ENCODE measurements at regions of chr5 and their contacts with region 1.

Region 1: DNA sequence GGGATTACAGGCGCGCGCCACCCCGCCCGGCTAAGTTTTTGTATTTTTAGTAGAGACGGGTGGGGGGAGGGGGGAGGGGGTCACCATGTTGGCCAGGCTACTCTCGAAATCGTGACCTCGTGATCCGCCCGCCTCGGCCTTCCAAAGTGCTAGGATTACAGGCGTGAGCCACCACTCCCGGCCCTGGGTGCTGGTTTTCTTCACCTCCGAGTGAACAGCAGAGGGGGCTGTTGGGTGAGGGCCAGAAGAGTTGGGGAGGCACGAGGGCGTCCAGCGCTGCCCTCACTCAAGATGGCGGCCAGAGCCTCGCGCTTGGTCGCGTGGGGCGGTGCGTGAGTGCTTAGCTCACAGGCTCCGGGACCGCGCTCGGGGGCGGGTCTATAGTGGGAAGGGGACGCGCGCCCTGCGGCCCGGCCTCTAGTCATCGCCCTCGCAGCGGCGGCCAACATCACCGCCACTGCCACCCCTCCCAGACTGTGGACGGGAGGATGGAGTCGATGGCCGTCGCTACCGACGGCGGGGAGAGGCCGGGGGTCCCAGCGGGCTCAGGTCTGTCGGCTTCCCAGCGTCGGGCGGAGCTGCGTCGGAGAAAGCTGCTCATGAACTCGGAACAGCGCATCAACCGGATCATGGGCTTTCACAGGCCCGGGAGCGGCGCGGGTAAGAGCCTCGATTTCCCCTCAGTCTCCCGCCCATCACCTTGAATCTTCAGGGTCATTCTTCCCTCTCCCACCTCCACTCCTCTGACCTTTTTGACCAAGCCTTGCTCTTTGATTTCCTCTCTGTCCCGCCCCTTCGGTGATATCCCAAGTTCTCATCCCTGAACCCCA is at the start of gene CAMLG:
- DNase-seq: peak; percentile 97
- H3K4me3 Mint-ChIP-seq: peak within 1 kb of the TSS; percentile 81
- H3K27ac Mint-ChIP-seq: peak within 1 kb of the TSS; percentile 88
- H3K4me1 Mint-ChIP-seq: peaks cover 26% of the 10 kb centered on the region
- H3K27me3 Mint-ChIP-seq: no peaks in the 10 kb centered on the region
- total RNA-seq, gene CAMLG: 34.6 to 36.9 TPM

Region 2: GRCh38 chr5:134004592-134005375 is 733.6 kb before region 1 on chr5 and contains the start of gene VDAC1:
- CTCF ChIA-PET with region 1: no interaction called
- intact Hi-C with region 1: loop called (anchors 10 kb)
- DNase-seq: peak; percentile 79
- H3K4me3 Mint-ChIP-seq: peak within 1 kb of the TSS; percentile 89
- H3K27ac Mint-ChIP-seq: peak within 1 kb of the TSS; percentile 95
- H3K4me1 Mint-ChIP-seq: peaks cover 42% of the 10 kb centered on the region
- H3K27me3 Mint-ChIP-seq: no peaks in the 10 kb centered on the region
- total RNA-seq, gene VDAC1: 485 to 513 TPM

Region 3: GRCh38 chr5:134304311-134304710 is 434.0 kb before region 1 on chr5:
- CTCF ChIA-PET with region 1: interaction called, 3 read pairs
- intact Hi-C with region 1: loop called (anchors 1 kb)
- DNase-seq: no peak
- H3K4me3 Mint-ChIP-seq: no peak overlapping the region
- H3K27ac Mint-ChIP-seq: no peak overlapping the region
- H3K4me1 Mint-ChIP-seq: peaks cover 6% of the 10 kb centered on the region
- H3K27me3 Mint-ChIP-seq: no peaks in the 10 kb centered on the region

Region 4: GRCh38 chr5:134527146-134527960 is 211.0 kb before region 1 on chr5:
- CTCF ChIA-PET with region 1: interaction called, 3 read pairs
- intact Hi-C with region 1: loop called (anchors 1 kb)
- DNase-seq: peak; percentile 78
- H3K4me3 Mint-ChIP-seq: peak overlapping the region; percentile 88
- H3K27ac Mint-ChIP-seq: peak overlapping the region; percentile 95
- H3K4me1 Mint-ChIP-seq: peaks cover 46% of the 10 kb centered on the region
- H3K27me3 Mint-ChIP-seq: no peaks in the 10 kb centered on the region

Region 5: DNA sequence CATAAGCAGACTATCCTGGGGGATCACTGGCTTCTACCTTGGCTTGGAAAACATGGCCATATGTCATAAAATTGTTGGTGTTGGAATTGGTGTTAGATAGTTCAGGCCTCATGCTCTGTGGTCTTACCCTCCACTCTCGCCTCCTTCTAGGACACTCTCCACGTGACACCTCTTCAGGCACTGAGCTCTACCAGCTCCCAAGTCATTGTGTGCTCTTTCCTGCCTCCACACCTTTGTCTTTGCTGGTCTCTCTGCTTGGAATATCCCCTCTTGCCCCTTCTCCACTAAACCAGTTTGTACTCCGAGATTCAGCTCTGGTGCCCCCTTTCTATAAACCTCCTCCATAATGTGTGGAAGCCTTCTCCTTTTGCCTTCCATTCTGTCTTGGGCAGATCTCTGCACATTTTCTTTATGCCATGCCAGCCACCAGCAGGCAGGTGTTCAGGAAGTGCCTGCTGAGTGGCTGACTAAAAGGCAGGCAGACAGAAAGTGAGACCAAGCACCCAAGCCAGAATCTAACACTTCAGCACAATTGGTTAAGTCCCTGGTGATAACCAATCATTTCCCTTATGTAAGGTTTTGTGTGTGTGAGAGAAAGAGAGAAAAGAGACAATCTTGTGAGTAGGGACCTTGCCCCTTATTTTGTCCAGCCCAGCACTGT is 143.4 kb before region 1 on chr5:
- CTCF ChIA-PET with region 1: interaction called, 4 read pairs
- intact Hi-C with region 1: loop called (anchors 2 kb)
- DNase-seq: peak; percentile 44
- H3K4me3 Mint-ChIP-seq: no peak overlapping the region
- H3K27ac Mint-ChIP-seq: peak overlapping the region; percentile 46
- H3K4me1 Mint-ChIP-seq: peaks cover 14% of the 10 kb centered on the region
- H3K27me3 Mint-ChIP-seq: no peaks in the 10 kb centered on the region

Region 6: GRCh38 chr5:134648425-134649162 is 89.8 kb before region 1 on chr5 and contains the start of gene SEC24A:
- CTCF ChIA-PET with region 1: no interaction called
- intact Hi-C with region 1: loop called (anchors 1 kb)
- DNase-seq: peak; percentile 92
- H3K4me3 Mint-ChIP-seq: peak within 1 kb of the TSS; percentile 89
- H3K27ac Mint-ChIP-seq: peak within 1 kb of the TSS; percentile 100
- H3K4me1 Mint-ChIP-seq: peaks cover 35% of the 10 kb centered on the region
- H3K27me3 Mint-ChIP-seq: no peaks in the 10 kb centered on the region
- total RNA-seq, gene SEC24A: 16.6 to 18.5 TPM

Region 7: DNA sequence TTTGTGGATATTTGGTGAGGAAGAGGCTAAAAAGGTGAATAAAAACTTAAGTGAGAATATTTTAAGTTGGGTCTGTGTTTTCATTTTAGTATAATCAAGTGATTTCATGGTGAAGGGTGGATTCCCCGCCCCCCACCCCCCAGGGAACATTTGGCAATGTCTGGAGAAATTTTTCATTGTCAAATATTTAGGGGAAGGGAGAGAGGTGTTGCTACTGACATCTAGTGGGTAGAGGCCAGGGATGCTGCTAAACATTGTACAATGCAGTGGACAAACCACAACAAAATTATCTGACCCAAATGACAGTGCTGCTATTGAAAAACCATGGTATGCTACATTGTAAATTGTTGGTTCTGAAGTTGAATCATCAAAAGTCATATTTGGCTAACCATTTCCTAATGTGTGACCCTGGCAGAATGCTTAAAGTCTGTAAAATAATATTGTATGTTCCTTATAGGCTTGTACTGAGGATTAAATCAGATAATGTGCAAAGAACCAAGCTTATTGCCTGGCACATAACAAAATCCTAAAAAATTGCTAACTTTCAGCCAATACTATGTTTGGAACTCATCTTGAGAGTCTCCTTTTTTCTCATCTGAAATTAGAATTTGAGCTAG is 113.1 kb after region 1 on chr5:
- CTCF ChIA-PET with region 1: no interaction called
- intact Hi-C with region 1: no loop called
- DNase-seq: no peak
- H3K4me3 Mint-ChIP-seq: no peak overlapping the region
- H3K27ac Mint-ChIP-seq: no peak overlapping the region
- H3K4me1 Mint-ChIP-seq: peaks cover 38% of the 10 kb centered on the region
- H3K27me3 Mint-ChIP-seq: no peaks in the 10 kb centered on the region

Region 8: DNA sequence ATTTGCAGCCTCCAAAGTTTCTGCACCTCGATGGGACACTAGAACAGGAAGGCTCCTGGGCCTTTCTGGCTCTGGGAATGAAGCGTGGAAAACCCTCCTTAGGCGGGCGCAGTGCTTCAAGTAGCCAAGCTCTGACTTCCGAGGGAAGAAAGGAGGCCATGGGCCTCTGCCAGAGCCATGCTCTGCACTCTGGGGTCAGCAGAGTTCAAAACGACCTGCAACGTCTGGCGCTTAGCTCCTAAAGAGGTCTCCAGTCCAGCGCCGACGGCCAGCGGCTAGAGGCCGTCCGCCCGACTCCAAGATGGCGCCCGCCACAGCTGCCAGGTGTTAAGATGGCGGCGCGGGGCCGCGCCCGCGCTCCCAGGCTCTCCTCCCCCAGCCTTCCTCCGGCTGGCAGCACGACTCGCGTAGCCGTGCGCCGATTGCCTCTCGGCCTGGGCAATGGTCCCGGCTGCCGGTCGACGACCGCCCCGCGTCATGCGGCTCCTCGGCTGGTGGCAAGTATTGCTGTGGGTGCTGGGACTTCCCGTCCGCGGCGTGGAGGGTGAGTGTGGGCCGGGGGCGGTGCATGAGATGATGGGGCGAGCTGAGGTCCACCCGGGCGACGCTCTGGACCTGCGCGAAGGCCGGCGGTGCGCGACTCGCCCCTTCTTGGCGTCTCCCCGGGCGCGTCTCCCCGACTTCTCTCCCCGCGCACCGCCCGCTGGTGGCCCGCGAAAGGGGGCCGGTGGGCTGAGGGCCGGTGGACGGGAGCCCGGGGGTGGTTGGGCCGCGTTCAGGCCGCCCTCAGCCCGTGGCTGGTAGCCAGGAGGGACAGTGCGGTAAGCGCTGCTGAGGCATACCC is 135.9 kb after region 1 on chr5 and contains the start of gene TXNDC15:
- CTCF ChIA-PET with region 1: no interaction called
- intact Hi-C with region 1: loop called (anchors 1 kb)
- DNase-seq: peak; percentile 84
- H3K4me3 Mint-ChIP-seq: peak within 1 kb of the TSS; percentile 89
- H3K27ac Mint-ChIP-seq: peak within 1 kb of the TSS; percentile 92
- H3K4me1 Mint-ChIP-seq: peaks cover 30% of the 10 kb centered on the region
- H3K27me3 Mint-ChIP-seq: no peaks in the 10 kb centered on the region
- total RNA-seq, gene TXNDC15: 19.8 to 20.9 TPM

Region 9: GRCh38 chr5:135829681-135830383 is 1091.5 kb after region 1 on chr5:
- CTCF ChIA-PET with region 1: no interaction called
- intact Hi-C with region 1: no loop called
- DNase-seq: peak; percentile 62
- H3K4me3 Mint-ChIP-seq: no peak overlapping the region
- H3K27ac Mint-ChIP-seq: no peak overlapping the region
- H3K4me1 Mint-ChIP-seq: peaks cover 4% of the 10 kb centered on the region
- H3K27me3 Mint-ChIP-seq: peaks cover 43% of the 10 kb centered on the region